Left cardiac atrium (tissue), 4 donors: ENCODE measurements at regions of chr9 and their contacts with region 1.

Region 1: GRCh38 chr9:37668116-37668601 is 17.4 kb downstream of the FRMPD1 start:
- DNase-seq: no peak
- ATAC-seq: peak; percentile 40 to 77

Region 2: DNA sequence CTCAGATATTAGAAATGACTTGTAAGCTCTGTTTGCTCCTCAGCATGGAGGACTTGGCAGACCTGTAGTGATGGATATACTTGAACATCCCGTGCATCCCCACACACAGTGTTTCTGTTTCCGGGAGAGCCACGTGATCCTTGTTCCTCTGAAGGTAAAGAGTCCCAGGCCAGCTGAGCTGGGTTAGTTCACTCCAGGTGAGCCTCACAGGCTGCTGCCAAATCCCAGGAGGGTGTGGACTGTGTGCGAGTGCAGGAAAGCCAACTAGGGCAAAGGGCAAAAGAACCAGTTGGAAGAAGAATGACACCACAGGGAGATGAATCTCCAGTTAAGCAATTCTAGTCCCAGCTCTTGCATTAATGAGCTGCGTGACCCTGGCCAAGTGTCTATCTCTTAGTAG is 65.3 kb before region 1 on chr9:
- intact Hi-C with region 1: loop called in 1 of 2 experiments (anchors 10 kb)
- DNase-seq: no peak
- ATAC-seq: peak; percentile 79 to 86